Activated CD4-positive, alpha-beta T cell treated with anti-CD3 and anti-CD28 coated beads, Interleukin-2, amount 10 ng/mL, durations not matched to agents 24 days and 14 days (primary cell): ENCODE measurements at regions of chr1 and their contacts with region 1.

Region 1: DNA sequence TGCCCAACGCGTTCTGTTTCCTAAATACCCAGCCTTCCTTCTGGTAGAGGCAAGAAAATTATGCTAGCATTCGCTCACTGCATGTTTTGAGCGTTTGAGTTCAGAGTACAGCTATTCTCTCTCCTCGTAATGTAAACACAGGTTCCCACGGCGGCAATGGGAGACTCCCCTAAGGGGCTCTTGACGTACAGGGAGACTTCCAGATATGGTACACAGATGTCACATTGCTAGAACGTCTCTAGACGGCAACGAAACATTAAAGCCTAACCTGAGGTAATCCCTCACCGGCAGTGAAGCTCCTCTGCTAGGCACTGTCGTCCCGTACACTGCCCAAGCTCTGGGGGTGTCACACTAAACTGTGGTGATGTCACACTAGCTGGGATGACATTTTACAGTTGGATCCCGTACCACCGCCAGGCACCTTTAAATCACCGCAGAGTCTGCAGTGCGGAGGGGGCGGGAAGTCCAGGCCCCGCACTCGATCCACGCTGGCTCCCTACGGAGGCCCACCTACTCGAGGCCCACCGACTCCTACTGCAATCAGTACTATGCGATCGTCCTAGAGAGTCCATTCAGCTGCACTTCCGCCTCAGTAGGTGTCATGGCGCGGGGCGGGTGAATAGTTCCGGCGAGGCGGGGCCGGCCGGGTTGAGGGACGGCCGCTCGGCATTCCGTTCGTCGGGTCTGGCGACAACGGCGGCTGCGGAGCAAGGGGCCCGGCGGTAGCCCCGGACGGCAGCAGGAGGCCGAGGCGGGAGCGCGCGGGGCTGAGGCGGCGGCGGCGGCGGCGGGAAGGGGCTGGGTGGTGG is at the start of gene HIPK1:
- DNase-seq: peak; percentile 98
- H3K4me3 Mint-ChIP-seq: peak within 1 kb of the TSS; percentile 98
- H3K27ac Mint-ChIP-seq: peak within 1 kb of the TSS; percentile 100
- H3K4me1 Mint-ChIP-seq: peaks cover 45% of the 10 kb centered on the region
- H3K27me3 Mint-ChIP-seq: peaks cover 4% of the 10 kb centered on the region
- total RNA-seq, gene HIPK1: 81.3 and 85.9 TPM in 2 replicates

Region 2: DNA sequence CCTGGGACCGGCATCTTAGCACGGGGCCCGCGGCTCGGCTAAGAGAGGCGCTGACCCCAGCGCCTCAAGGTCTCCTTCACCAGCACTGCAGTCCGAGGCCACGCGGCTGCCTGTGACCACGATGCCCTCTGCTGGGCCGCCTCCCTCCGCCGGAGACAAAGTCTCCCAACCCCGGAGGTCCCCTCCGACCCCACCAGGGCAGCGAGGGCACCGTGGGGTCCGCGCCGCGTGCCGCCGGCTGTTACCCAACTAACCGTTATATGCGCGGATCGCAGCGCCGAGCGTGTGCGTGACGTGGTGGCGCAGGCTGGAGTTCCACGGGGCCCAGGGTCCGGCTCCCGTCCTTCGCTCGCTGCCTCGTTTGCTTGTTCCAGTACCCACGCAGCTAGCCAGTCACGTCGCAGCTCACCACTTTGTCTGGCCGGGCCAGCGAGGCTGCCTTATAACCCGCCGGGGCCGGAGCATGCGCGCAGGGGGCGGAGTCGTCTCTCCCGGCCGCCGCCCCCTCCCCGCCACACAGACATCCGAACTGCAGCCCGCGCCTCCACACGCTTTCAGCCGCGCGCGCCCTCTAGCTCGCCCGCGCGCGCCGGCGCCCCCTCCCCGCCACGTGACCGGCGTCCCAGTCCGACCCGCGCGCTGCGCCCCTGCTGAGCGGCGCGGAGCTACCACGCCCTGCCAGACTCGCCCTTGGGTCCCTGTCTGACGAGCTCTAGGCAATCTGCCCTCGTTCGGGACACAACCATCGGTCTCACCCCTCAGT is 973.2 kb before region 1 on chr1 and contains the start of gene SLC16A1:
- intact Hi-C with region 1: loop called (anchors 10 kb)
- DNase-seq: peak; percentile 97
- H3K4me3 Mint-ChIP-seq: peak within 1 kb of the TSS; percentile 88
- H3K27ac Mint-ChIP-seq: peak within 1 kb of the TSS; percentile 100
- H3K4me1 Mint-ChIP-seq: peaks cover 51% of the 10 kb centered on the region
- H3K27me3 Mint-ChIP-seq: no peaks in the 10 kb centered on the region
- total RNA-seq, gene SLC16A1: 79.2 and 79.7 TPM in 2 replicates

Region 3: DNA sequence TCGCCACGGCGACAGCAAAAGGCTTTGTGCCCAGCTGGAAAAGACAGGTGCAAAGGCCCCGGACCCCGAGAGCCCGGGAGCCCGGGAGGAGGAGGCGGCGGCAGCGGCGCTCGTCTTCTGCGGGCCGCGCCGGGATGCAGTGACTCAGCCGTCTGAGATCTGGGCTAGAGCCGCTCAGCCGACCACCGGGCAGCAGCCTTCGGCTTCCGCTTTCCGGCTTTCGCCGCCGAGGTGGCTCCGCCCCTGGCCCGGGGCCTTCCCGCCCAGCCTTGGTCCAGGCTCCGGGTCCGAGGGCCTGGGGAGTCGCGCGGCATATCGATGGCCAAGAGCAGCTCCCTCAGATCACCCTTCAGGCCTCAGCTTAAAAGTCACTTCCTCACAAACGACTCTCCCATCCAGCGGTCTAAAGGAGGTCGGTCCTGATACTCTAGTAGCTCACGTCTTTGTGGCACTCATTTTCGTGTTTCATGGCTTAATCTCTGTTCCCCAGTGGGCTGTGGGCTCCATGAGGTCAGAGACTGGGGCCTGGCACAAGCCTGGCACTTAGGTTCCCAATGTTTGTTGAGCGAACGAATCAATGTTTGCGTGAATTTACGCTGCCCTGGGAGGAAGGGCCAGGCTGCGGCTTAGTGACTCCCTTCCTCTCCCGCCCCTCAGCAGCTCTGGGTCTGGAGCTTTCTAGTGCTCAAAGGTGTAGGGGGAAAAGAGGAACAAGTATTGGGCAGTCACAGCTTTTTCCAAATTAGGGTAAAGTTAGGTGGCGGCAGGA is 169.6 kb before region 1 on chr1 and contains the start of gene PHTF1:
- intact Hi-C with region 1: loop called (anchors 2 kb)
- DNase-seq: peak; percentile 89
- H3K4me3 Mint-ChIP-seq: peak within 1 kb of the TSS; percentile 97
- H3K27ac Mint-ChIP-seq: peak within 1 kb of the TSS; percentile 97
- H3K4me1 Mint-ChIP-seq: peaks cover 30% of the 10 kb centered on the region
- H3K27me3 Mint-ChIP-seq: no peaks in the 10 kb centered on the region
- total RNA-seq, gene PHTF1: 15.6 and 19.2 TPM in 2 replicates

Region 4: DNA sequence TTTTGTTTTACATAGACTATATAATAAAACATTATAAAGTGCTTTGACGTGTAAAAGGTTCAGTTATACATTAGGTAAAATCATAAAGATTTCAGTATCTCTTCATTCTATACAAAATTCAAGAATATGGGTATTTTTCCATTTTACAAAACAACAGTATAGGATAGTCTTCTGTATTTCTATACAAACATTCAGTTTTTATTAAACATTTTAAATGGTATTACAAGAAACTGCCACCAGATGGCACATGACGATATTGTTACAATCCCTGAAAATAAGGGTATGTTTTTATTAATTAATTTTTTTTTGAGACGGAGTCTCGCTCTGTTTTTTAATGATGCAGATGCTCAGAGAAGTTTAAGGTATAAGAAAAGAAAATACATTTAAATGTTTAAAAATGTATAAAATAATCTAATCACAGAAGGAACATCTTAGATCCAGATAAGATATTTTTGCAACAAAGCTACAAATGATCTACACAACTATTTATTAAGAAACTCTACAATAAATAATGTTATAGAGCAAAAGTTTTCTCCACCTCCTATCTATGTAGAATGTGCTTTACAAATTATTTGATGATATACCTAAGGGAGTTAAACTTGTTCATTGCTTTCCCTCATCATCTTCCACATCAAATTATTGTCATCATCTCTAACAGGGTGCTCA is 93.4 kb before region 1 on chr1:
- intact Hi-C with region 1: loop called (anchors 1 kb)
- DNase-seq: peak; percentile 72
- H3K4me3 Mint-ChIP-seq: no peak overlapping the region
- H3K27ac Mint-ChIP-seq: no peak overlapping the region
- H3K4me1 Mint-ChIP-seq: peaks cover 4% of the 10 kb centered on the region
- H3K27me3 Mint-ChIP-seq: no peaks in the 10 kb centered on the region

Region 5: DNA sequence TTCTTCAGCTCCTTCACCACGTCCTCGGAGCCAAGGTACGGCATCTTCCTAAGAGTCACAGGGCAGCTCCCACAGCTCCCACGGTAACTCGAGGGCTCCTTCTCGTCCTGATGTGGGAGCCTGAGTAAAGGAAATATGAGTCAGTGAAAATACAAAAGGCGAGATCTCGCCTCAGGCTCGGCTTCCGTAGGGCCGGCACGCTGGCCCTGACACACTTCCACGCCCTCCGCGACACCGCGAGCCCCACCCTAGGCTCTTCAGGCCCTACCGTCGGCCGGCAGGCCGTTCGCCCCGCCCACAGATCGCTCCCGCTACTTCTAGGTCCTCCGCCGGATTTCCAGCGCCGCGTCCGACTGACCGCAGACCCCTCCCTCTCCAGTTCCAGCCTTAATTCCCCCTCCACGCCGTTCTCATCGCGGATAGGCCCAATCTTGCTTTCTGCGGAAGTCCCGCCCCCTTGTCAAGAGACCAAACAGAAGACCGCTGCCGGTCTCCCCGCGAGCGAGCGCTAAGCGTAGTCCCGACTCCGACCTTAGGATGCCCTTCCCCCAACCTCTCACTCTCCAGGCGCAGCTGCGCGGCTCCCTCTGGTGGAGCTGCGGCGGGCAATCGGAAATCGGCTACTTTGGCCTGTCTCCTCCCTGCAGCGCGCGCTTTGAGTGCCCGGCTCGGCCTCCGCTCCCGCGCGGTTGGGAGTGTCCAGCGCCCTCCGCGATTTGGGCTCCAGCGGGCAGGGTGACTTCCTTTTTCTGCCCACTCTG is 24.3 kb before region 1 on chr1 and contains the starts of genes AP4B1 and DCLRE1B:
- intact Hi-C with region 1: loop called (anchors 1 kb)
- DNase-seq: peak; percentile 99
- H3K4me3 Mint-ChIP-seq: peak within 1 kb of the TSS; percentile 99
- H3K27ac Mint-ChIP-seq: peak within 1 kb of the TSS; percentile 98
- H3K4me1 Mint-ChIP-seq: peaks cover 53% of the 10 kb centered on the region
- H3K27me3 Mint-ChIP-seq: no peaks in the 10 kb centered on the region
- total RNA-seq, gene AP4B1: 41.7 and 42.3 TPM in 2 replicates
- total RNA-seq, gene DCLRE1B: 21.5 and 22.5 TPM in 2 replicates

Region 6: DNA sequence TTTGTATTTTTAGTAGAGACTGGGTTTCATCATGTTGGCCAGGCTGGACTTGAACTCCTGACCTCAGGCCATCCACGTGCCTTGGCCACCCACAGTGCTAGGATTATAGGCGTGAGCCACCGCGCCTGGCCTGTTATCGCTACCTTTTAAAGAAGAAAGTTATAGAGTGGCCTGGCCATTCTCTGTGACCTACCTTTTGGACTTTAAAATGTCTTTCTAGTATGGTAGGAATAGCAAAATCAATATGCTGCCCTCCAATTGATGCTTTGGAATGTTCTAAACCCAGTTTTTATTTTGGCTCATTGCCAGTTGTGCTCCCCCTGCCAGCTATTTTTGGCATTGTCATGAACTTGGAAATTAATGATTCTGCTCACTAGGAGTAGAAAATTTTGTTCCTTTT is 19.9 kb after region 1 on chr1:
- intact Hi-C with region 1: loop called (anchors 2 kb)
- DNase-seq: no peak
- H3K4me3 Mint-ChIP-seq: no peak overlapping the region
- H3K27ac Mint-ChIP-seq: no peak overlapping the region
- H3K4me1 Mint-ChIP-seq: peaks cover 37% of the 10 kb centered on the region
- H3K27me3 Mint-ChIP-seq: no peaks in the 10 kb centered on the region

Region 7: GRCh38 chr1:113990530-113990929 is 61.4 kb after region 1 on chr1:
- intact Hi-C with region 1: no loop called
- DNase-seq: no peak
- H3K4me3 Mint-ChIP-seq: no peak overlapping the region
- H3K27ac Mint-ChIP-seq: no peak overlapping the region
- H3K4me1 Mint-ChIP-seq: no peaks in the 10 kb centered on the region
- H3K27me3 Mint-ChIP-seq: no peaks in the 10 kb centered on the region